ENCODE measurements at regions of chr13 and their contacts with region 1.

Region 1: DNA sequence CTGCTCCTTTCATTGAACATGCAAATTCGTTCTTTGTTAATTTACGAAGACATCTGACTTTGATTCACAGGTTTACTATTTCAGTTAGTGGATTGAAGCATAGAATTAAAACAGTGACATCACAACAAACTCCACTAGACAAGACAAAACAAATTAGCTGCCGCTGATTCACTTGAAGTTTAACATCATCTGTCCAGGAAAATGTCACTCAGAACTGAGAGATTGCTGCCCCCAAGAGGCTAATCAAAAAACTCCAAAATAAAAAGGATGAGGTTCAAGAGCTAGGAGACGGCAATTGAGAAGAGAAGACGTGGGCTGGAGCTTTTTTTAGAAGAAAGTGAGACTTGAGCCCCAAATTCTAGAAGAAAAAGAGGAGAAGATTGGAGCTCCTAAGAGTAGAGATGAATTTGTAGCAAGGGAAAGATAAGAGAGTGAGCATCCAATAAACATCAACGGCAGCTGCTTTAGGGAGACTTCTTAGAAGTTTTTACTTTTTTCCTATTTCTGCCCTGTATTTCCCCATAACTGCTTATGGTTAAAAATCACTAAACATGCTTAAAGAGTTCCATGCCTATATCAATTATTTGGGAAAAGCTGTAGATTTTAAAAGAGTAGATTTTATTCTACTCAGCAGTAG is 40.8 kb upstream of the TPP2 start:
- DNase-seq: peak; percentile 33
- ATAC-seq: peak; percentile 68
- H3K4me3 Mint-ChIP-seq: no peak overlapping the region
- H3K27ac Mint-ChIP-seq: no peak overlapping the region
- H3K4me1 Mint-ChIP-seq: peaks cover 1% of the 10 kb centered on the region
- H3K27me3 Mint-ChIP-seq: peaks cover 2% of the 10 kb centered on the region

Region 2: DNA sequence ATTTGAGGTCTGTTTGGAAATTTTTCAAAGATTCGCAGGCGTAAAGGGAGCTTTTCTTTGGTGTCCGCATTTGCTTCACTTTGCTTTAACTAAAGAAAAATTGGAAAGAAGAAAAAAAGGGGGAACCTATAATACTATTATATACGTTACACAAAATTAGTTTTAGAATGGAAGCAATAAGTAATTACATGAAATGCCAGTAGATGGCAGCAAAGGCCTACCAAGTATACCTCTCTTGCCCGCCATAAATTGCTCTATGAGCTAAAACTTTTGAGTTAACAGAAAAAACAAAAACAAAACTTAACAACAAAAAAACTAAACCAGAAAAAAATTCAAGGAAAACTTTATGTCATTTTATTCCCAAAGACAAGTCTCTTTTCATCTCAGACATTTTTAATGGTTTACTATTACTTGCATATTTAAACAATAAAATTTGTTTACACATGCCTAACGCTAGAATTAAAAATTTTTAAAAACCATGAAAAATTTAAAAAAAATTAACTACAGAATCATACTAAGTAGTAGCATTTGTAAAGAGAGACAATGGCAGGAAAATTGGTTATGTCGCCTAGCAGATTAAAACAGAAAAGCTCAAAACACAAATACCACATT is 1411.1 kb before region 1 on chr13:
- CTCF ChIA-PET with region 1: interaction called, 24 read pairs
- POLR2A ChIA-PET with region 1: no interaction called
- DNase-seq: peak; percentile 48
- ATAC-seq: peak; percentile 47
- H3K4me3 Mint-ChIP-seq: no peak overlapping the region
- H3K27ac Mint-ChIP-seq: no peak overlapping the region
- H3K4me1 Mint-ChIP-seq: no peaks in the 10 kb centered on the region
- H3K27me3 Mint-ChIP-seq: peaks cover 9% of the 10 kb centered on the region

Region 3: DNA sequence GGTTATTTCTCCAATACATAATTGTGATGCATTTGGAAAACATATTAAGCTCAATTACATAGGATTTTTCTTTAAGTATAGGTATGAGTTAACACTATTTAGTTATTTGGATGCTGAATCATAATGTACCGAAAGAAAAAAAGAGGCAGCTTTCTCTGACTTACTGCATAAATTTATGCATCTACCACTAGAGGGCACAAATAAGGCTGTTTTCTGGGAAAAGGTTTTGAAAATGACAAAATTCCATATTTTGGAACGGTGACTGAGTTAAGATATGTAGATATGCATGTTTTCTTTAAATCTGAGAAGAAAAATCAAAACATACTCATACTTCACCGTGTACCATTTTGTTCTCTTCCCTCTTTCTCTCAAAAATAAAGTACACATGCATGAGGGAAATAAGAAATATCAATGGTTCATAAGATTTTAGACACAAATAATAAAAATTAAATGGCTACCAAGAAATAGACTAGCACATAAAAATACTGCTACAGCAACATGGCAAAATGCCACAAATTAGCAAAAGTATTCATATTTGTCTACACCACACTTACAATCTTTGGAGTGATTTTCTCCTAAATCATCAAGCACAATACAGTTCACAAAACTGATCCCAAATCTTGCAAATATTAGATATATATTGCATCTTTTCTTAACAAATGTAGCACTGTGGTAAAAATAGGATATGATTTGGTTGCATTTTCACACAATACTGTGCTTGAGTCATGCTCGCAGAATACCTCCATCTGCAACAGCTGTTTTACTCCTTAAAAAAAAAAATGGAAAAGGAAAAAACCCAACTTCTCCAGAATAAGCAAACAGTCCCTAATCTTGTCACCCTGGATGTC is 414.2 kb before region 1 on chr13:
- CTCF ChIA-PET with region 1: interaction called, 29 read pairs
- POLR2A ChIA-PET with region 1: no interaction called
- DNase-seq: no peak
- ATAC-seq: no peak
- H3K4me3 Mint-ChIP-seq: no peak overlapping the region
- H3K27ac Mint-ChIP-seq: no peak overlapping the region
- H3K4me1 Mint-ChIP-seq: no peaks in the 10 kb centered on the region
- H3K27me3 Mint-ChIP-seq: no peaks in the 10 kb centered on the region

Region 4: DNA sequence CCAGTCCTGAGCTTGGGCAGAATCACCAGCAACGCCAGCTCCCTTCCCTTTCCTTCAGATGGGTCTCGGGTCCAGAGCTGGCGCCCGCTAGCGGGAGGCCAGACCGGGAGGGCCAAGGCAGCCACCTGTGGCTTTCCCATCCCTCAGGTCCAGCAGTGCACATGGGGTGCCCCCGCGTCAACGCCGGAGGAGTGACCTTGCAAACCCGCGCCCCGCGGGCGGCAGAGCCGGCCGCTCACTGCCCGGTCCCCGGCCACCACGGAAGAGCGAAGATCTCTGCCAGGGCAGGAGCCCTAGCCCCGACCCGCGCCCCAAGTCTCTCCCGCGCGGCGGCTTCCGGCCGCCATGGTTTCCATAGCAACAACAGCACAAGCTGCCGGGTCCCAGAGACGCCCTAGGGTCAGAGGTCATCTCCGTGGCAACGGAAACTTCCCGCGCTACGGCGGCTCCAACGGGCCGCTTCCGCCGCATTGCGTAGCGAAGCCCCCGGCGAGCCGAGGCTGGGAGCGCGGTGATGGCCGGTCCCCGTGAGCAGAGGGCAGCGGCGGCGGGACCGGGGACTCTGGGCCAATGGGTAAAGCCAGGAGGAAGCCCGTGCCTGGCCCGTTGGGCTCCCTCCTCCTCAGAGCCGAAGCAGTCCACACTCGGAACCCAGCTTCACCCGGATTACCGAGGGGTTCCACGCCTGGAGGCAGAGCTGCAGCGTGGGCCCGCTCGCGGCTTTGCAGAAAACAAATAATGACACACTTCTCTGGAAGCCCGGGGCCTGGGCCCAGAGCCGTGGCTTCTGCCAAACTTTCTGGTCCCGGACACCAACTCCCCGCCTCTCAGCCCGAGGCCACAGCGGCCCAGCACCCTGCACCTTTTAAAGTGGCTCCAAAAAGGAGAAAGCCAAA is 161.6 kb before region 1 on chr13:
- CTCF ChIA-PET with region 1: interaction called, 18 read pairs
- POLR2A ChIA-PET with region 1: no interaction called
- DNase-seq: peak; percentile 97
- ATAC-seq: peak; percentile 91
- H3K4me3 Mint-ChIP-seq: peak overlapping the region; percentile 81
- H3K27ac Mint-ChIP-seq: peak overlapping the region; percentile 84
- H3K4me1 Mint-ChIP-seq: peaks cover 25% of the 10 kb centered on the region
- H3K27me3 Mint-ChIP-seq: peaks cover 26% of the 10 kb centered on the region

Region 5: DNA sequence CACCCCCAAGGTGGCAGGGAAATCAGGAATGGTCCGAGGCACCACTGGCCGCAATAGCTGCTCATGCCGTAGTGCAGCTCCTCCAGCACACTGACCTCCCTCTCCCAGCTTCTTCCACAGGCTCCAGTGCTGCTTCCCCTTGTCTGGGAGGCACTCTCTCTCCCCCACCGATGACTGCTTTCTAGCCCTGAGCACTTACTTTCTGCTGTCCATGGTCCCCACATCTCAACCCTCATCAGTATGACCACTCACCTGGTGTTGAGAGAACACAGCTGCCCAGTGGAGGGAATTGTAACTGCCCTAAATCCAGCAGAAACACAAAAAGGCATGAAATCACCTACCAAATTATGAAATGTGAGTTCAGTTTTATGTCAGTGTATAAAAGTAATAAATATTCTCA is 11.8 kb after region 1 on chr13:
- CTCF ChIA-PET with region 1: interaction called, 14 read pairs
- POLR2A ChIA-PET with region 1: no interaction called
- DNase-seq: no peak
- ATAC-seq: no peak
- H3K4me3 Mint-ChIP-seq: no peak overlapping the region
- H3K27ac Mint-ChIP-seq: no peak overlapping the region
- H3K4me1 Mint-ChIP-seq: no peaks in the 10 kb centered on the region
- H3K27me3 Mint-ChIP-seq: peaks cover 18% of the 10 kb centered on the region

Measured in activated CD8-positive, alpha-beta T cell treated with anti-CD3 and anti-CD28 coated beads, Interleukin-2, amount 10 ng/mL, durations not matched to agents 7 days and 5 days (primary cell).